Caco-2 (cell line): ENCODE measurements at regions of chr9 and their contacts with region 1.

Region 1: GRCh38 chr9:132411091-132411508 is 1.1 kb downstream of the CFAP77 start:
- DNase-seq: peak; percentile 81 to 84
- H3K4me3 ChIP-seq: no peak overlapping the region
- H3K4me3 Mint-ChIP-seq: peak overlapping the region; percentile 61
- H3K27ac Mint-ChIP-seq: no peak overlapping the region
- H3K4me1 ChIP-seq: peaks cover 13% of the 10 kb centered on the region
- H3K4me1 Mint-ChIP-seq: peaks cover 7% of the 10 kb centered on the region
- H3K27me3 ChIP-seq: peaks cover 2% of the 10 kb centered on the region; the same call in 1 of the 2 replicates
- H3K27me3 Mint-ChIP-seq: peaks cover 22% of the 10 kb centered on the region
- CTCF ChIP-seq: peak; percentile 80 to 87

Region 2: DNA sequence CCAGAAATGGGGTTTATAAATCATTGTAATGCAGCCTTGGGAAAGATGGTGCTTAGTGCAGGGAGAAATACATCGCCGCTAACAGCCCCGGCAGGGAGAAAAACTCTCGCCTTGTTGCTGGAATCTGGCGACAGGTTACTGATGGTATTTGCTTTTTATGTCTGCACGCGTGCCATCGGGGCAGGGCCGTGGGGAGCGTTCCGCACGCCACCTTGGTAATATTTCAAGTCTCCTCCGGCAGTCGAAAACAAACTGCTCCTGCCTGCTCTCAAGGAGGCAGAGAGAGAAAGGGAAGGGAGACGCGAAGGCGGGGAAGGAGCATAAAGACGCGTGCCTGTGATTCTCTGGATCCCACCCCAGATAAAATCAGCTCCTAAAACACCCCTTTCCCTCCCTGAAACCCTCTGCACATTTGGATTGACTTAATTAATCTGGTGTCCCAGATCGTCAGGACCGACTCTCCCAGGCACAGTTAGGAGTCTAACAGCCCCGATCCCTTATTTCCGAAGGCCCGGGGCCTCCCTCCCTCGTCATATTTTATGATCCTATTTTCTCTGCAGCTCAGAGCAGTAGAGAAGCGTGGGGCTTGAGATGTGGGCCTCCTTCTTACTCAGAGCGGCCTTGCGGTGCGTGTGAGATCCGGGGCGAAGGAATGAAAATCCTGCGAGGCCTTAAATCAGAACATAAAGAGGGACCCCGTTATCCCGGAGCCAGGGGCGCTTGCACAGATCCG is 46.6 kb after region 1 on chr9:
- CTCF ChIA-PET with region 1: no interaction called
- POLR2A ChIA-PET with region 1: no interaction called
- intact Hi-C with region 1: loop called (anchors 2 kb)
- DNase-seq: no peak
- H3K4me3 ChIP-seq: no peak overlapping the region
- H3K4me3 Mint-ChIP-seq: no peak overlapping the region
- H3K27ac Mint-ChIP-seq: no peak overlapping the region
- H3K4me1 ChIP-seq: no peaks in the 10 kb centered on the region
- H3K4me1 Mint-ChIP-seq: no peaks in the 10 kb centered on the region
- H3K27me3 ChIP-seq: no peaks in the 10 kb centered on the region
- H3K27me3 Mint-ChIP-seq: peaks cover 3% of the 10 kb centered on the region
- CTCF ChIP-seq: no peak

Region 3: GRCh38 chr9:132507746-132508469 is 96.8 kb after region 1 on chr9:
- CTCF ChIA-PET with region 1: interaction called, 4 read pairs
- POLR2A ChIA-PET with region 1: no interaction called
- intact Hi-C with region 1: loop called (anchors 1 kb)
- DNase-seq: peak; percentile 72 to 77
- H3K4me3 ChIP-seq: no peak overlapping the region
- H3K4me3 Mint-ChIP-seq: no peak overlapping the region
- H3K27ac Mint-ChIP-seq: no peak overlapping the region
- H3K4me1 ChIP-seq: no peaks in the 10 kb centered on the region
- H3K4me1 Mint-ChIP-seq: no peaks in the 10 kb centered on the region
- H3K27me3 ChIP-seq: no peaks in the 10 kb centered on the region; the same call in 1 of the 2 replicates
- H3K27me3 Mint-ChIP-seq: peaks cover 9% of the 10 kb centered on the region
- CTCF ChIP-seq: peak; percentile 82 to 85

Region 4: GRCh38 chr9:132575005-132575609 is 164.0 kb after region 1 on chr9:
- CTCF ChIA-PET with region 1: interaction called, 5 read pairs
- POLR2A ChIA-PET with region 1: no interaction called
- intact Hi-C with region 1: loop called (anchors 1 kb)
- DNase-seq: peak; percentile 82 to 85
- H3K4me3 ChIP-seq: no peak overlapping the region
- H3K4me3 Mint-ChIP-seq: no peak overlapping the region
- H3K27ac Mint-ChIP-seq: no peak overlapping the region
- H3K4me1 ChIP-seq: no peaks in the 10 kb centered on the region
- H3K4me1 Mint-ChIP-seq: no peaks in the 10 kb centered on the region
- H3K27me3 ChIP-seq: no peaks in the 10 kb centered on the region
- H3K27me3 Mint-ChIP-seq: peaks cover 26% of the 10 kb centered on the region
- CTCF ChIP-seq: peak; percentile 82 to 86

Region 5: DNA sequence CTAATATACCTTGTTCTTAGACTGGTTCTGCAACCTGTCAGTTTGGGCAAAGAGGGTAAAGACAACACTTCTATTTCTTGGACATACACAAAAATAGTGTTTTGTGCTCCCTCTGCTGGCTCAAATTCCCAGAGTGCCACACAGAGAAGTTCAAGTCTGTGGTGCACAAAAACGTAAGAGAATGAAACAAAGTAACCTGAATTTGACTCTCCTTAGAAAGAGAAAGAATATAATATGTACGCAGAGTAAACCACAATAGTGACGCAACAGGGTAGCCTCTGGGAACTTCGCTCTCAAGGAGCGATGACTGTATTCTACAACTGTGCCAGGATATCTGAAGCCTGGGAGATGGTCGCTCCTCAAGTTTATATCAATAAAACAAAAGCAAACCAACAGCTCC is 240.2 kb after region 1 on chr9:
- CTCF ChIA-PET with region 1: no interaction called
- POLR2A ChIA-PET with region 1: no interaction called
- intact Hi-C with region 1: loop called (anchors 2 kb)
- DNase-seq: peak in 1 of 2 experiments; percentile 43
- H3K4me3 ChIP-seq: no peak overlapping the region
- H3K4me3 Mint-ChIP-seq: no peak overlapping the region
- H3K27ac Mint-ChIP-seq: no peak overlapping the region
- H3K4me1 ChIP-seq: no peaks in the 10 kb centered on the region
- H3K4me1 Mint-ChIP-seq: no peaks in the 10 kb centered on the region
- H3K27me3 ChIP-seq: no peaks in the 10 kb centered on the region
- H3K27me3 Mint-ChIP-seq: no peaks in the 10 kb centered on the region
- CTCF ChIP-seq: peak; percentile 50 to 52